Calu3 (cell line): ENCODE measurements at regions of chr5 and their contacts with region 1.

Region 1: GRCh38 chr5:80654391-80655230 is at the starts of genes DHFR and MSH3:
- DNase-seq: peak; percentile 94
- H3K4me3 Mint-ChIP-seq: peak within 1 kb of the TSS; percentile 80
- H3K27ac Mint-ChIP-seq: peak within 1 kb of the TSS; percentile 80
- H3K4me1 Mint-ChIP-seq: peaks cover 23% of the 10 kb centered on the region
- H3K27me3 Mint-ChIP-seq: no peaks in the 10 kb centered on the region
- CTCF ChIP-seq: no peak
- total RNA-seq, gene DHFR: 46.9 and 58.0 TPM in 2 replicates
- total RNA-seq, gene MSH3: 15.5 and 17.2 TPM in 2 replicates

Region 2: GRCh38 chr5:80008995-80009765 is 645.4 kb before region 1 on chr5:
- CTCF ChIA-PET with region 1: no interaction called
- intact Hi-C with region 1: no loop called
- DNase-seq: no peak
- H3K4me3 Mint-ChIP-seq: no peak overlapping the region
- H3K27ac Mint-ChIP-seq: no peak overlapping the region
- H3K4me1 Mint-ChIP-seq: no peaks in the 10 kb centered on the region
- H3K27me3 Mint-ChIP-seq: no peaks in the 10 kb centered on the region
- CTCF ChIP-seq: no peak

Region 3: GRCh38 chr5:80406980-80407734 is 247.5 kb before region 1 on chr5:
- CTCF ChIA-PET with region 1: interaction called, 10 read pairs
- intact Hi-C with region 1: no loop called
- DNase-seq: peak; percentile 1
- H3K4me3 Mint-ChIP-seq: peak overlapping the region; percentile 86
- H3K27ac Mint-ChIP-seq: peak overlapping the region; percentile 67
- H3K4me1 Mint-ChIP-seq: peaks cover 22% of the 10 kb centered on the region
- H3K27me3 Mint-ChIP-seq: no peaks in the 10 kb centered on the region
- CTCF ChIP-seq: no peak

Region 4: GRCh38 chr5:80825786-80826460 is 171.3 kb after region 1 on chr5:
- CTCF ChIA-PET with region 1: no interaction called
- intact Hi-C with region 1: no loop called
- DNase-seq: no peak
- H3K4me3 Mint-ChIP-seq: no peak overlapping the region
- H3K27ac Mint-ChIP-seq: no peak overlapping the region
- H3K4me1 Mint-ChIP-seq: no peaks in the 10 kb centered on the region
- H3K27me3 Mint-ChIP-seq: no peaks in the 10 kb centered on the region
- CTCF ChIP-seq: no peak